Activated CD4-positive, alpha-beta memory T cell treated with anti-CD3 and anti-CD28 coated beads, Interleukin-2, amount 10 ng/mL, durations not matched to agents 7 days and 5 days (primary cell): ENCODE measurements at regions of chr6 and their contacts with region 1.

Region 1: DNA sequence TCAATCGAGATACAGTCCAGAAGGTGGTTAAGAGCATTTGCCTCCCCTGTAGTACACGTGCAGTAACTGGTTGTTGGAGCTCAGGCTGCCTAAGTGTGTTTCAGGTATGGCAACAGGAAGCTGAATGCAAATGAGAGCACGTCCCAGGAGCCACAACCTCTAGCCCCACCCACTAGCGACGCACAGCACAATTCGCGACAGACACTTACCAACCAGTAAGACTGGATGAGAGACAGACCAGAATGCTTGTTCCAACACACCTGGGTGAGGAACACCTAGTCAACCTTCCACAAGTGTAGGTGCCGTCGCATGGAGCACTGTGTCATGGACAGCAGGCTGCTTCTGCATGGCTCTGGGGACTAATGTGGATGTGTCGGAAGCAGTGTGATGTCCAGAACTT is 7.2 kb upstream of the SERPINB1 start:
- DNase-seq: peak; percentile 81
- H3K4me3 Mint-ChIP-seq: peak overlapping the region; percentile 43
- H3K27ac Mint-ChIP-seq: peak overlapping the region; percentile 74
- H3K4me1 Mint-ChIP-seq: peaks cover 49% of the 10 kb centered on the region
- H3K27me3 Mint-ChIP-seq: no peaks in the 10 kb centered on the region

Region 2: GRCh38 chr6:2744209-2744771 is 104.6 kb before region 1 on chr6:
- CTCF ChIA-PET with region 1: no interaction called
- POLR2A ChIA-PET with region 1: no interaction called
- DNase-seq: no peak
- H3K4me3 Mint-ChIP-seq: no peak overlapping the region
- H3K27ac Mint-ChIP-seq: no peak overlapping the region
- H3K4me1 Mint-ChIP-seq: no peaks in the 10 kb centered on the region
- H3K27me3 Mint-ChIP-seq: peaks cover 13% of the 10 kb centered on the region

Region 3: DNA sequence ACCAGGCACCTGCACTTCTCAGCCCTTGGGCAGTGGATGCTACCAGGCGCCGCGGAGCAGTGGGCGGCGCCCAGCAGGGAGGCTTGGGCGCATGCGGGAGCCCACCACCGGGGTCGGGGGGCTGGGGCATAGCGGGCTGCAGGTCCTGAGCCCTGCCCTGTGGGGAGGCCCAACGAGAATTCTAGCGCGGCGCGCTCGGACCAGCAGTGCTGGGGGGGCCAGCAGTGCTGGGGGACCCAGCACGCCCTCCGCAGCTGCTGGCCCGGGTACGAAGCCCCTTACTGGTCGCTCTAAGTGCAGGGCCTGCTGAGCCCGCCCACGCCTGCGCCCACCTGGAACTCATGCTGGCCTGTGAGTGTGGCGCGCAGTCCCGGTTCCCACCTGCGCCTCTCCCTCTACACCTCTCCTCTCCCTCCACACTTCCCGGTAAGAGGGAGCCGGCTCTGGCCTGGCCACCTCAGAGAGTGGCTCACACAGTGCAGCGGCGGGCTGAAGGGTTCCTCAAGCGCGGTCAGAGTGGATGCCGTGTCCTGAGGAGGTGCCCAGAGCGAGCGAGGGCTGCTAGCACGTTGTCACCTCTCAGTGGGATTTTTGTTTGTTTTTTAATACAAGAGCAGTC is 21.3 kb after region 1 on chr6:
- CTCF ChIA-PET with region 1: interaction called, 11 read pairs
- POLR2A ChIA-PET with region 1: interaction called, 30 read pairs
- DNase-seq: no peak
- H3K4me3 Mint-ChIP-seq: no peak overlapping the region
- H3K27ac Mint-ChIP-seq: no peak overlapping the region
- H3K4me1 Mint-ChIP-seq: peaks cover 41% of the 10 kb centered on the region
- H3K27me3 Mint-ChIP-seq: no peaks in the 10 kb centered on the region

Region 4: DNA sequence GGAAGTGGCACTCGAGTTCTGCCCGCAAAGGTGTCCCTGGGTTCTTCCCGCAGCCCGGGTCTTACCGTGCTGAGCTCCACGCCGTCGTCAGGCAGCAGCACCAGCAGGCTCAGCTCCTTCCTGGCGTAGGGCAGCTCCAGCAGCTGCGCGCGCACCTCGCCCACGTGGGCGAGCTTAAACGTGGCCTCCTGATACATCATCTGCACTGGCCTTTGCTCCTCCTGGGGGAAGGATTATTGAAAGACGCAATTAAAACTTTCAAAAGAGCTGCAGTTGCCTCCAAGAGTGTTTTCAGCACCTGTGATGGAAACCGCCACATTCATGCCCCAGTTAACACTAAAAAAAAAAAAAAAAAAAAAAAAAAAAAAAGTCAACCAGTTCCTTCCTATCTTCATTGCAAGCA is 42.9 kb after region 1 on chr6:
- CTCF ChIA-PET with region 1: interaction called, 21 read pairs
- POLR2A ChIA-PET with region 1: interaction called, 11 read pairs
- DNase-seq: peak; percentile 83
- H3K4me3 Mint-ChIP-seq: peak overlapping the region; percentile 70
- H3K27ac Mint-ChIP-seq: peak overlapping the region; percentile 75
- H3K4me1 Mint-ChIP-seq: peaks cover 54% of the 10 kb centered on the region
- H3K27me3 Mint-ChIP-seq: no peaks in the 10 kb centered on the region

Region 5: GRCh38 chr6:2911171-2911570 is 62.3 kb after region 1 on chr6:
- CTCF ChIA-PET with region 1: interaction called, 62 read pairs
- POLR2A ChIA-PET with region 1: interaction called, 6 read pairs
- DNase-seq: no peak
- H3K4me3 Mint-ChIP-seq: no peak overlapping the region
- H3K27ac Mint-ChIP-seq: no peak overlapping the region
- H3K4me1 Mint-ChIP-seq: peaks cover 22% of the 10 kb centered on the region
- H3K27me3 Mint-ChIP-seq: no peaks in the 10 kb centered on the region

Region 6: DNA sequence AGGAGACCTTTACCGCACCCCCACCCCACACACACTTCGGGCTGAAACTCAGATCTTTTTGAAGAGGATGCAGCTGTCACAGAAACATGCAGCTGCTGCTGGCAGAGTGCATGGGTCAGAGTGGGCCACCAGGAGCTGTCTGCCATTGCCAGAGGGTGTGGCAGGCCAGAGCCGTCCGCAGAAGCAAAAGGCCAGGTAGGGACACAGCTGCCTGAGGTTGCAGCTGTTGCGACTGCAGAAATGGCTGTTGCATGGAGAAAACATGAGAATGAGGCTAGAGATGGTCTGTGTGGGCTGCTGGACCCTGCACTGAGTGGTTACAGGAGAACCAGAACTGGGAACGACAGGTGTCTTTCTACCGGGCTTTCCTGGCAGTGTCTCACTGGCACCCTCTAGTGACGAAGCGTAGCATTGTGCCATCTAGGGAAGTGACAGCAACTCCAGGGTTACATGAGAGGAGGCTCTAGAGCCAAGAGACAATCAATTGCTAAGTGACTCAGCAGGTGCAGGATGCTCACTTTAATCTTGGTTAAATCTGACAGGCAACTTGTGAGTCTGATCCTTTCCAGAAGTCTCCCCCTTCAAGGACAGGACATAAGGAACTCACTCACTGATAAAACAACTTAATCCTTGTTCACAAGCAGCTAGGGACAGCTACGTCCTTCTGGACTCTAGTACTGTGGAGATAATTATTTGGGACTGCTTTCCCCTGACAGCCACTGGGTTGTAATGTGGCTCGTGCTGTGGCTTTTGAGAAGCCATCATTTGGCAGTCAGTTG is 83.3 kb after region 1 on chr6:
- CTCF ChIA-PET with region 1: interaction called, 170 read pairs
- POLR2A ChIA-PET with region 1: interaction called, 11 read pairs
- DNase-seq: peak; percentile 88
- H3K4me3 Mint-ChIP-seq: no peak overlapping the region
- H3K27ac Mint-ChIP-seq: no peak overlapping the region
- H3K4me1 Mint-ChIP-seq: peaks cover 23% of the 10 kb centered on the region
- H3K27me3 Mint-ChIP-seq: peaks cover 20% of the 10 kb centered on the region

Region 7: DNA sequence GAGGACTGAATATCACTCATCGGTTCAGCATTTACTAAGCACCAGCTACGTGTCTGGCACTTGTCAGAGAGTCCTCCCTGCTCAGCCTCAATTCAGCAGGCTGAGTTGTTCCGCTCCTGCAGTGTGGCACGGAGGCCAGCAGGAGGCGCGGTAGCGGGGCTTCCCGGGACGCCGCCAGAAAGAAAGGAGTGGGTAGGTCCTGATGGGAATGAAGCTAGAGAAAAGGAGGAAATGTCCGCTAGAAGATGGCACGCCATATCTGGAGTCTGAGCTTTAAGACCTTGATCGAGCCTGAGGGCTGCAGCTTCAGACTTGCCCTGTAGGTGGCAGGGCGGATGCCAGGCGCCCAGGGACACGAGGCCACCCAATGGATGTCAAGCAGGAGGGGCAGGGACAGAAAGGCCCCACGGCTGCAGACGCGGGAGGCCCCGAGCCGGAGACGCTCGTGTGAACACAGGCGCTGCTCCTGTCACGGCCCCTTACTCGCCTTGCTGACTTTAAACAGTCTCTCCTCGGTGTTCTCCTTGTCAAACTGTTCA is 103.8 kb after region 1 on chr6:
- CTCF ChIA-PET with region 1: interaction called, 16 read pairs
- POLR2A ChIA-PET with region 1: no interaction called
- DNase-seq: peak; percentile 48
- H3K4me3 Mint-ChIP-seq: no peak overlapping the region
- H3K27ac Mint-ChIP-seq: no peak overlapping the region
- H3K4me1 Mint-ChIP-seq: no peaks in the 10 kb centered on the region
- H3K27me3 Mint-ChIP-seq: peaks cover 13% of the 10 kb centered on the region